Activated CD4-positive, alpha-beta memory T cell treated with anti-CD3 and anti-CD28 coated beads for 36 hours (primary cell): ENCODE measurements at regions of chr15 and their contacts with region 1.

Region 1: DNA sequence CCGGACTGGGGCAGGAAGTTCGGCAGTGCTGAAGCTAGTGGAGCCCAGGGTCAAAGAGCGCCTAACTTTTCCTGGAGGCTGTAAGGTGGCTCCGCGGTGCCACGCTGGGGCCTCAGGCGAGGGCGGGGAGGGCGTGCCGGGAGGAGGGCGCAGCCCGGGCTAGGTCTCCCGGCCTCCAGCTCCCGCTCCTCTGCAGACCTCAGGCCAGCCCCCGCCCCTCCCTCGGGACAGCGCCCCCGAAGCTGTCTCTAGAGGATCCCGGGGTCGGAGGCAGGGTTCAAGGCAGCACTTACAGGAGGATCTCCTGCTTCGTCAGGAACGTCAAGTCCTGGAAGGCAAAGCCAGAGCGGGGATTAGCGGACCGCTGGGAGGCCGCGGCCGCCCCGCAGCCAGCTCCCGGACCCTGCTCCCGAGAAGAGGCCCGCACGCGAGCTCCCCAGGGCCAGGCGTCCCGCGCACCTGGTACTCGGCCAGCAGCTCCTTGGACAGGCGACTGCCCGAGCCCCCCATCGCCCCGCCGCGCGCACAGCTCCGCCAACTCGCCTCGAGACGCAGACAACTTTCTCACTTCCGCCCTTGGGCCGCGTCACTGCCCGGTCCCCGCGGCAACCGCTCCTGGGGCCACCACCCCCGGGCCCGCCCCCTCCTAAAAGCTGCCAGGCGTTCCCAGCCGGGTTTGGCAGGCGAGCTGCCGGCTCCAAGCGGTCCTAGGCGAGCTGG is at the start of gene CIB1:
- DNase-seq: peak; percentile 99
- H3K4me3 Mint-ChIP-seq: peak within 1 kb of the TSS; percentile 94
- H3K27ac Mint-ChIP-seq: peak within 1 kb of the TSS; percentile 92
- H3K4me1 Mint-ChIP-seq: peaks cover 54% of the 10 kb centered on the region
- H3K27me3 Mint-ChIP-seq: no peaks in the 10 kb centered on the region
- total RNA-seq, gene CIB1: 162 to 170 TPM

Region 2: DNA sequence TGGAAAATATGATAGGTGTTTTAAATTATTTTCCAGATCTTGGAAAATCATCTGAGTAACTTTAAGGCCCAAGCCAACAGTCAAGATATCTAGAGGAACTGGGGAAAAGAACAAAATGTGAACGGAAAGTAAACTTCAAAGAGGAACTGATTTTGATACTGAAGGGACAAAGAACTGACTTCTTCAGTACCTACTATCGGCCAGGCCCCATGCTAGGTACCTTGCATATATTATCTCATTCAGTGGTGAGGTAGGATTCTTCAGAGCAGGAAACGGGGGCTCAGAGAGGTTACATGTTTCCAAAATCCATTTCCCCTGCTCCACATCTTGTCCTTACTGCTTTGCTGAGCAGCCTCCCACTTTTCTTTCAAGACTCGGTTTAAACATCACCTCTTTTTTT is 242.2 kb before region 1 on chr15:
- CTCF ChIA-PET with region 1: no interaction called
- POLR2A ChIA-PET with region 1: no interaction called
- intact Hi-C with region 1: no loop called
- DNase-seq: no peak
- H3K4me3 Mint-ChIP-seq: no peak overlapping the region
- H3K27ac Mint-ChIP-seq: no peak overlapping the region
- H3K4me1 Mint-ChIP-seq: no peaks in the 10 kb centered on the region
- H3K27me3 Mint-ChIP-seq: no peaks in the 10 kb centered on the region

Region 3: DNA sequence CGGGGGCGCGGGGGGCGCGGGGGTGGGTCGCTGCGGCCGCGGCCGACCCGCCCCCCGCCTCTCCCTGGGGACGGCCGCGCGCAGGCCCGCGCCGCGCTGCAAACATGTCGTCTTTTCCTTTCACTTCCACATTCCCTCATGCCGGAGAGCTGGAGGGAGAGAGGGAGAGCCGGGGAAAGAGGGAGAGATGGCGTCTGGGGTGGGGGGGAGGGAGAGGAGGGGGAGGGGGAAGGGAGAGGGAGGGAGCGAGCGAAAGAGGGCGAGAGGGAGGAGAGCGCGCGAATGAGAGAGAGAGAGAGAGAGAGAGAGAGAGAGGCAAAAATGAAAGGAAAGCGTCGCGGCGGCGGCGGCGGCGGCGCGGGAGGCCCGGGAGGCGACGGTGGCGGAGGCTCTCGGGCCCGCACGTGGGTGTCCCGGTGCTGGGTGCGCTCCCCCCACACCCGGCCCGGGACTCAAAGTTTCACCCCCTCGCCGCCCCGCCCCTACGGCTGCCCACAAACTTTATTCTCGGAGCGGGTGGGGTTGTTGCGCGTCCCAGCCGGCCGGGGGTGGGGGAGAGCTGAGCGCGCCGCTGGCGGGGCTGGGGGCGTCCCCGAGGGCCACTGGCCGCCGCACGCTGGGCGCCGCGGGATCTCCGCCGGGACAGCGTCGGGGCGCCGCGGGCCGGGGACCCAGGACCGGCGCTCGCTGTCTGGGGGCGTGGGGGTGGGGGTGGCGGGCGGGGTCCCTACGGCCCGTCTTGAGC is 231.7 kb before region 1 on chr15:
- CTCF ChIA-PET with region 1: no interaction called
- POLR2A ChIA-PET with region 1: no interaction called
- intact Hi-C with region 1: loop called (anchors 2 kb)
- DNase-seq: peak; percentile 78
- H3K4me3 Mint-ChIP-seq: peak overlapping the region; percentile 86
- H3K27ac Mint-ChIP-seq: peak overlapping the region; percentile 86
- H3K4me1 Mint-ChIP-seq: peaks cover 52% of the 10 kb centered on the region
- H3K27me3 Mint-ChIP-seq: no peaks in the 10 kb centered on the region

Region 4: GRCh38 chr15:90143166-90143655 is 90.3 kb before region 1 on chr15:
- CTCF ChIA-PET with region 1: interaction called, 18 read pairs
- POLR2A ChIA-PET with region 1: no interaction called
- intact Hi-C with region 1: loop called (anchors 2 kb)
- DNase-seq: peak; percentile 85
- H3K4me3 Mint-ChIP-seq: no peak overlapping the region
- H3K27ac Mint-ChIP-seq: peak overlapping the region; percentile 39
- H3K4me1 Mint-ChIP-seq: peaks cover 20% of the 10 kb centered on the region
- H3K27me3 Mint-ChIP-seq: no peaks in the 10 kb centered on the region

Region 5: DNA sequence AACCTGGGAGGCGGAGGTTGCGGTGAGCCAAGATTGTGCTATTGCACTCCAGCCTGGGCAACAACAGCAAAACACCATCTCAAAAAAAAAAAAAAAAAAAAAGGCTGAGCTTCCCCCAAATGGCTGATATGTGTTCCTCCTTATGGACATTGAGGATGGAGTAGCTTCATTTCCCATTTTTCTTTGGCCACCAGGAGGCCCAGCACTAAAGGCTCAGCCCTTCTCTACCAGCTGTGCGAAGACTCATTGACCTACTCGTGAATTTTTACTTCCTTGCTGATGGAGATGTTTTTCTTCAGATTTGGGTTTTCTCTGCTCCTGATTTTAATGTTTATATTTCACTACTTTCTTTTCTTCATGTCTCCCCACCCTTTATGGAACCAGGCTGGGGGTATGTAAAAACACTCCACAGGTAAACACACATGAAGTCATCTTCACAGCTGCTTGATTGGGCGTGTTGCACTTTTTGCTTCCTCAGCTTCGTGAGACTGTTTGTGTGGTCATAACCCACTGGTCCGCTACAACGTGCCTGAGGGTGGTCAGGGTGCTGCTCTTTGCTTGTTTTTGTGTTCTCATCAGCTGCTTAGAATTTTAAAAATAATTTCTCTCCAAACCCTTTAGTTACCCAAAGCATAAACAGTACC is 18.9 kb before region 1 on chr15:
- CTCF ChIA-PET with region 1: interaction called, 12 read pairs
- POLR2A ChIA-PET with region 1: interaction called, 4 read pairs
- intact Hi-C with region 1: no loop called
- DNase-seq: no peak
- H3K4me3 Mint-ChIP-seq: no peak overlapping the region
- H3K27ac Mint-ChIP-seq: no peak overlapping the region
- H3K4me1 Mint-ChIP-seq: peaks cover 28% of the 10 kb centered on the region
- H3K27me3 Mint-ChIP-seq: no peaks in the 10 kb centered on the region

Region 6: GRCh38 chr15:90249203-90249863 is 15.8 kb after region 1 on chr15 and contains the start of gene TTLL13:
- CTCF ChIA-PET with region 1: interaction called, 4 read pairs
- POLR2A ChIA-PET with region 1: interaction called, 16 read pairs
- intact Hi-C with region 1: no loop called
- DNase-seq: peak; percentile 89
- H3K4me3 Mint-ChIP-seq: peak within 1 kb of the TSS; percentile 63
- H3K27ac Mint-ChIP-seq: no peak within 1 kb of the TSS
- H3K4me1 Mint-ChIP-seq: peaks cover 20% of the 10 kb centered on the region
- H3K27me3 Mint-ChIP-seq: no peaks in the 10 kb centered on the region
- total RNA-seq, gene TTLL13: 0.55 to 0.73 TPM

Region 7: GRCh38 chr15:90286678-90287077 is 53.1 kb after region 1 on chr15:
- CTCF ChIA-PET with region 1: no interaction called
- POLR2A ChIA-PET with region 1: no interaction called
- intact Hi-C with region 1: loop called (anchors 2 kb)
- DNase-seq: peak; percentile 48
- H3K4me3 Mint-ChIP-seq: no peak overlapping the region
- H3K27ac Mint-ChIP-seq: no peak overlapping the region
- H3K4me1 Mint-ChIP-seq: no peaks in the 10 kb centered on the region
- H3K27me3 Mint-ChIP-seq: no peaks in the 10 kb centered on the region

Region 8: DNA sequence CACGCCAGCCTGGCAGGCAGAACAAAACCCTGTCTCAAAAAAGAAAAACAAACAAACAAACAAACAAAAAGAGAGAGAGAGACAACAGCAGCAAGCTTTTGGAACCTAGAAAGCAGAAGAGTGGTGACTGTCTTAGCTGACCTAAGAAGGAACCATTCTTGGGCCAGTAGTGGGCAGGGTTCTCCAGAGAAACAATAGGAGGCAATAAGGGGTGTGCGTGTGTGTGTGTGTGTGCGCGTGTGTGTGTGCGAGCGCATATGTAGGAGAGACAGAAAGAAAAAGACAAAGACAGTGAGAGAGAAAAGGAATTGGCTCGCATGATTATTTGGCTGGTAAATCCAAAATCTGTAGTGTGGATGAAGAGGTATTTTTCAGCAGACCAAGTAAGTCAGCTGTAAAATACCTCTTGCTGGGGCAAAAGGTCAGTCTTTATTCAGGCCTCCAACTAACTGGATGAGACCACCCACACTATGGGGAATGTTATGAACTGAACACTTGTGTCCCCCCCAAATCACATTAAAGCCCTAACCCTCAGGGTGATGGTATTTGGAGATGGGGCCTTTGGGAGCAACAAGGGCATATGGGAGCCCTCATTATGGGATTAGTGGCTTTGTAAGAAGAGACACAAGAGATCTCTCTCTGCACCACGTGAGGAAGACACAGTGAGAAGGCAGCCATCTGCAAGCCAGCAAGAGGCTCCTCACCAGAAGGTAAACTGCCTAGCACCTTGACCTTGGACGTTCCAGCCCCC is 468.5 kb after region 1 on chr15:
- CTCF ChIA-PET with region 1: no interaction called
- POLR2A ChIA-PET with region 1: no interaction called
- intact Hi-C with region 1: no loop called
- DNase-seq: no peak
- H3K4me3 Mint-ChIP-seq: no peak overlapping the region
- H3K27ac Mint-ChIP-seq: no peak overlapping the region
- H3K4me1 Mint-ChIP-seq: peaks cover 4% of the 10 kb centered on the region
- H3K27me3 Mint-ChIP-seq: no peaks in the 10 kb centered on the region